GM10248 (cell line): ENCODE measurements at regions of chr20 and their contacts with region 1.

Region 1: DNA sequence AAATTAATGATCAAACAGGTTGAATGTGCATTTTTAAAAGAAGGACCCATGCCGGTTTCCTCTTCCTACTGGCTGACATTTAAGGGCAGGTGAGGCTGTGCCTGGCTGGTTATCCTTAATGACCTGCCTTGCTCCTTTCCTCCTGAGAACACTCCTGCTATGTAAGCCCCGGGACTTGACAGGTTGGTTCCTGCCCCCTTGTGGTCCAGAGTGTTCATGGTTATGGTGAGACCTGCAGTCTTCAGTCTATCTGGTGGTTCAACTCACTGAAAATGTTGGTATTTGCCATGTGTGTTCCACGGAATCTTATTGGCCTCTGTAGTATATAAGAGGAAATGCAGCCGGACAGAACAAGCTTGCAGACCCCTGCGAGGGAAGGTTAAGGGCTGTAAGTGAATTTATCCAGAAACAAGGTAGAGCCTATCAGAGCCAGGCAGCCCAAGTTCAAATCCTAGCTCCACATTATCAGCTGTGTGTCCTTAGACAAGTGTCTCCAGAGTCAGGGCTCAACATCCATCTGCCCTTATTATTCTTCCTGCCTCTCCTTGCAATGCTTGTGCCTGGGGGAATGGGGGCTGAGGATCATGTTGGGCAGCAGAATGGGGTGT is 5.2 kb upstream of the BPIFA3 start:
- DNase-seq: peak; percentile 55
- CTCF ChIP-seq: peak; percentile 53

Region 2: GRCh38 chr20:33097001-33097400 is 114.9 kb before region 1 on chr20:
- CTCF ChIA-PET with region 1: interaction called, 13 read pairs
- POLR2A ChIA-PET with region 1: no interaction called
- DNase-seq: no peak
- CTCF ChIP-seq: no peak